ENCODE measurements at regions of chr22 and their contacts with region 1.

Region 1: DNA sequence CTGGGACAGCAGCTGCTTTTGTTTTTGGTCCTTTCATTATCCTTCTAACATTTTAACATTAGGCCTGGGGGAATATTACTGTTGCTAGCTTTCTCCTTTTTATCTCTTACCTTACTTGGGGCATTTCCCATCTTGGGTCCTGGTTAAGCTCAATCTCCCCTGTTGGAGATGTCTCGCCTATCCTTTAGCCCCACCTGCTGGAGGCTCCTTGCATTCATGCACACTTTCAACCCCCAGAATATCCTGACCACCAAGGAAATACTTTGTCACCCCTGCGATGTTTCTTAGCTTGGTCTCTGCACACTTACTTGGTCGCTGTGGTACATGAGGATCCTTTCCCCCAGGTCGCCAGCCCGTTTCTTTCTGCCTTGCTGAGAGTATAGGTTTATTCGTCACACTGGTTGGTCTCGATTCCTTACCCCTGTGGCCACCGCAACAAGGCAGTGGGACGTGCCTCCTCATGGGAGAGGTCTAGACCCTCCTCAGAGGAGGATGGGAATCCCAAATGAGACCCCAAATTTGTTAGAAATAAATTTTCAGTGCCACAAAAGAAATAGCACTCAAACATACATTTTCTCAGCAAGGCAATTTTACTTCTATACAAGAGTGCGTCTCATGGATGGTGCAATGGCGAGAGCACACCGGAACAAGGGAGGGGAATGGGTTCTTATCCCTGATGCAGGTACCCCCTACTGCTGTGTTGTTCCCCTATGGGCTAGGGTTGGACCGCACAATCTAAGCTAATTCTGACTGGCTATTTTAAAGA is 5.4 kb upstream of the TXN2 start:
- DNase-seq: peak; percentile 43 to 75 (median 55)
- H3K4me3 ChIP-seq: no peak overlapping the region
- H3K4me3 Mint-ChIP-seq: peak overlapping the region in 1 of 7 donors; percentile 31
- H3K27ac ChIP-seq: no peak overlapping the region
- H3K27ac Mint-ChIP-seq: peak overlapping the region in 2 of 8 donors; percentile 67 to 87
- H3K4me1 ChIP-seq: peaks cover 6% of the 10 kb centered on the region
- H3K4me1 Mint-ChIP-seq: peaks cover 6 to 9% (median 9%) of the 10 kb centered on the region in 3 donors
- H3K27me3 ChIP-seq: no peaks in the 10 kb centered on the region
- H3K27me3 Mint-ChIP-seq: peaks cover 0 to under 1% of the 10 kb centered on the region in 2 donors

Region 2: DNA sequence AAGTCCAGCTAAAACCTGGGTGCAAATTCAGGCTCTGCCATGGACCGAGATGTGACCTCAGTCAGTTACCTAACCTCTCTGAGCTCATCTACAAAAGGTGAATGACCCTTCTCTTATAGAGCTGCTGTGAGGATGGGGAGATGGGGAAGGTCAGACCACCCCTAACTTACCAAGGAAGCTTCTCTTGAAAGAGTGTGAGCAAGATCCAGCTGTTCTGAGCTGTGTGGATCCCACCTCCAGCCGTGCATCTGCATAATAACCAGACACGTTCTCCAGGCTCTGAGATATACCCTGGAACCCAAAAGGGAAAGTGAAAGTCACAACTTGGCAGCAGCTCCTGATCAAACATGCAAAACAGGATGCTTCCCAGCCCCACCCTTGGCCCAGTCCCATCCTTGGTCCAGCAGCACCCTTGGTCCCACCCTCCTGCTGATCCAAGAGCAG is 326.3 kb before region 1 on chr22 and contains the start of gene APOL3:
- CTCF ChIA-PET with region 1: no interaction called
- POLR2A ChIA-PET with region 1: no interaction called
- DNase-seq: peak; percentile 22 to 74 (median 66)
- H3K4me3 ChIP-seq: peak within 1 kb of the TSS; percentile 95
- H3K4me3 Mint-ChIP-seq: peak within 1 kb of the TSS; percentile 91 to 99 (median 96)
- H3K27ac ChIP-seq: peak within 1 kb of the TSS; percentile 84
- H3K27ac Mint-ChIP-seq: peak within 1 kb of the TSS; percentile 93 to 100 (median 99)
- H3K4me1 ChIP-seq: peaks cover 67% of the 10 kb centered on the region
- H3K4me1 Mint-ChIP-seq: peaks cover 86 to 93% (median 90%) of the 10 kb centered on the region in 3 donors
- H3K27me3 ChIP-seq: no peaks in the 10 kb centered on the region
- H3K27me3 Mint-ChIP-seq: no peaks in the 10 kb centered on the region
- total RNA-seq, gene APOL3: 43.1 to 48.3 TPM

Region 3: GRCh38 chr22:36191106-36191836 is 295.5 kb before region 1 on chr22:
- CTCF ChIA-PET with region 1: interaction called, 10 read pairs
- POLR2A ChIA-PET with region 1: no interaction called
- DNase-seq: no peak
- H3K4me3 ChIP-seq: no peak overlapping the region
- H3K4me3 Mint-ChIP-seq: no peak overlapping the region
- H3K27ac ChIP-seq: no peak overlapping the region
- H3K27ac Mint-ChIP-seq: peak overlapping the region in 1 of 8 donors; percentile 8
- H3K4me1 ChIP-seq: no peaks in the 10 kb centered on the region
- H3K4me1 Mint-ChIP-seq: no peaks in the 10 kb centered on the region
- H3K27me3 ChIP-seq: no peaks in the 10 kb centered on the region
- H3K27me3 Mint-ChIP-seq: peaks cover 0 to 11% of the 10 kb centered on the region in 2 donors

Region 4: DNA sequence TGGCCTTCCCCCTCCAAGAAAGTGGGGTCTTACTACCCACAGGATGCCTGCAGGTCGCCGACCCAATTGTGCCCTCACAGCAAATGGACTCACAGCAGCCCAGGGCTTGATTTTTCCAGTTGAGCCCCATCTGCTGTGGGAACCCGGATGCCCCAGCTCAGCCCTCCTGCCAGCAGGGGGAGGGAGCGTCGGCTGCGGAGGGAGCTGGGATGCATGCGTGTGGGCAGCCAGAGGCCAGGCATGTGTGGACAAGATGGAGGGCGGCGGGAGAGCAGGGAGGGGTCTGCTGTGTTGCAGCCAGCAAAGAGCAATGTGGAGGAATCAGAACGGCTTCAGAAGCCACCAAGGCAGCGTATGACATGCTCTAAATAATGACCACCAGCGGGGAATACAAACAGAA is 83.2 kb after region 1 on chr22:
- CTCF ChIA-PET with region 1: no interaction called
- POLR2A ChIA-PET with region 1: no interaction called
- DNase-seq: no peak
- H3K4me3 ChIP-seq: no peak overlapping the region
- H3K4me3 Mint-ChIP-seq: no peak overlapping the region
- H3K27ac ChIP-seq: no peak overlapping the region
- H3K27ac Mint-ChIP-seq: no peak overlapping the region
- H3K4me1 ChIP-seq: no peaks in the 10 kb centered on the region
- H3K4me1 Mint-ChIP-seq: no peaks in the 10 kb centered on the region
- H3K27me3 ChIP-seq: no peaks in the 10 kb centered on the region
- H3K27me3 Mint-ChIP-seq: peaks cover 14 to 41% of the 10 kb centered on the region in 2 donors